PC-9 (cell line): ENCODE measurements at regions of chr6 and their contacts with region 1.

Region 1: GRCh38 chr6:34771727-34772126 is 14.4 kb downstream of the SNRPC start:
- DNase-seq: no peak
- H3K4me3 ChIP-seq: no peak overlapping the region
- H3K27ac ChIP-seq: no peak overlapping the region
- H3K4me1 ChIP-seq: no peaks in the 10 kb centered on the region
- H3K27me3 ChIP-seq: no peaks in the 10 kb centered on the region
- CTCF ChIP-seq: no peak

Region 2: GRCh38 chr6:34176261-34177031 is 595.3 kb before region 1 on chr6:
- CTCF ChIA-PET with region 1: no interaction called
- POLR2A ChIA-PET with region 1: interaction called, 14 read pairs
- intact Hi-C with region 1: no loop called
- DNase-seq: no peak
- H3K4me3 ChIP-seq: no peak overlapping the region
- H3K27ac ChIP-seq: no peak overlapping the region
- H3K4me1 ChIP-seq: peaks cover 24% of the 10 kb centered on the region
- H3K27me3 ChIP-seq: no peaks in the 10 kb centered on the region
- CTCF ChIP-seq: no peak